ENCODE measurements at regions of chr21 and their contacts with region 1.

Region 1: DNA sequence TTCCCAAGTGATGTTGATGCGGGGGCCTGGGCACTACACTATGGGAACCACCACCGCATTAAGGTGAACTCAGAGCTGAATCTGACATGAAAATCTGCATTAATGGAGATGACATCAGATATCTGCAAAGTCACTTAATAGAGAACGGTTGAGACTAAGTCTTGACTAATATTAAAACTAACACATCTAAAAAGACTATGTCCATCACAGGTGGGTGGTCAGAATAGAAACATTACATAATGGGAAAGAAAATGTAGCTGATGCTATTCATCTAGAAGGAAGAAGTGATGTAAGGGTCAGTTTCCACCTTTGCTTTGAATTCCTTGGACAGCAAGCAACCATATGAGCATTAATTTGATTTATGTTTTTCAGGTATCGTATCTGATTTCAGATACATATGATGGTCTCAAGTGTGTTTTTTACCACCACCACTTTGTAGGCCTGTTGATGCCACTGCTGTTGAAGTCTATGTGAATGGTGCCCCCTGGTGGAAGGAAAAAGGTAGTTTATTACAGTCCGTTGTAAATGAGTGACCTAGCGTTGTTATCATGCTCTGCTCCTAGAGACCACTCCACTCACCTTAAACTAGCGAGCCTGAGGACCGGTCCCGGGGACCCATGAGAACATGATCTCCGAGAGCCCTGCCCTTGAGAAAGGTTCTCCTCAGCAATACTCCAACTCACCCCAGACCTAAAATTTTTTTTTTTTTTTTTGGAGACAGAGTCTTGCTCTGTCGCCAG is 73.5 kb downstream of the BACH1 start:
- DNase-seq: peak in 8 of 9 experiments; percentile 26 to 83 (median 53)
- ATAC-seq: peak; percentile 79
- H3K4me3 ChIP-seq: no peak overlapping the region
- H3K4me3 Mint-ChIP-seq: no peak overlapping the region
- H3K27ac ChIP-seq: no peak overlapping the region
- H3K27ac Mint-ChIP-seq: no peak overlapping the region
- H3K4me1 ChIP-seq: peaks cover 9% of the 10 kb centered on the region
- H3K4me1 Mint-ChIP-seq: peaks cover 10% of the 10 kb centered on the region
- H3K27me3 ChIP-seq: no peaks in the 10 kb centered on the region
- H3K27me3 Mint-ChIP-seq: no peaks in the 10 kb centered on the region
- CTCF ChIP-seq: peak; percentile 63

Region 2: DNA sequence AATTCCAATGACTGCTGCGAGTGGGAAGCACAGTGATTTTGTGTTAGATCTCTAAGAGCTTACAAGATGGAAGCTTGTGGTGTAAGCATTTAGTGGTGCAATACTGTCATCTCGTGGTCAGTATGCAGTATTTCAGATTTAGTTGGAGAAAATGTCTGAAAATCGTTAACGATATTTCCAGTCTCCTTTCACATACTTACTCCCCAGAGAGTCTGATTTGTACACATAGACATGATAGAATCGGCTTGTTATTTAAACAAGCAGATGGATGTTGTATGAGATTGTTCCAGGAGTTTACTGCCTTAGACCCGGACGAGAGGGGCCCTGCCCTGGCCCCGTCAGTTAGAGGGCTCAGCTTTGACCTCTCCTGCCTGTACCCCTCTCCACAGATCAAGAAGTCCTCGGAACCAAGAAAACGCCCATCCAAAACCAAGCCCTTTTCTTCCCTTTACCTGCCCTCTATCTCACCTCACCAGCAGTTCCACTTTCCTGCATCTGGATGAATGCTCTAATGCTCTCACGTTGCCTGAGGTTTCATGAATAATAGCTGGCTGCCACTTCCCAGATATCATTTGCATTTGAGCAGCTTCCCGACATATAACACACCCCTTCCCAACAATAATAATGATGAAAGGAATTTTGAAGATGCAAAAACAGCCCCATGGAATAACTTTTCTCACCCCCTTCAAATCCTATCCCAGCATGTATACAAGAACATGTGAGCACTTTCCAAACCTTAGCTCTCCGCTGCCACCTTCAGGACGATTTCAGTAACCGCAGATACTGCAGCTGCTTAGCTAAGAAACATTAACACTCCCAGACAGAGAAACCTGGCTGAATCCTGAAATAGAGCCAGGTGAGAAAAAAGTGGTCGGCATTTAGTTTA is 626.9 kb before region 1 on chr21:
- CTCF ChIA-PET with region 1: no interaction called
- POLR2A ChIA-PET with region 1: no interaction called
- intact Hi-C with region 1: loop called in 1 of 2 experiments (anchors 10 kb)
- DNase-seq: peak; percentile 42 to 86 (median 68)
- ATAC-seq: peak; percentile 86
- H3K4me3 ChIP-seq: peak overlapping the region; percentile 49 to 50
- H3K4me3 Mint-ChIP-seq: no peak overlapping the region
- H3K27ac ChIP-seq: no peak overlapping the region
- H3K27ac Mint-ChIP-seq: no peak overlapping the region
- H3K4me1 ChIP-seq: no peaks in the 10 kb centered on the region
- H3K4me1 Mint-ChIP-seq: no peaks in the 10 kb centered on the region
- H3K27me3 ChIP-seq: no peaks in the 10 kb centered on the region
- H3K27me3 Mint-ChIP-seq: no peaks in the 10 kb centered on the region
- CTCF ChIP-seq: peak; percentile 73

Region 3: DNA sequence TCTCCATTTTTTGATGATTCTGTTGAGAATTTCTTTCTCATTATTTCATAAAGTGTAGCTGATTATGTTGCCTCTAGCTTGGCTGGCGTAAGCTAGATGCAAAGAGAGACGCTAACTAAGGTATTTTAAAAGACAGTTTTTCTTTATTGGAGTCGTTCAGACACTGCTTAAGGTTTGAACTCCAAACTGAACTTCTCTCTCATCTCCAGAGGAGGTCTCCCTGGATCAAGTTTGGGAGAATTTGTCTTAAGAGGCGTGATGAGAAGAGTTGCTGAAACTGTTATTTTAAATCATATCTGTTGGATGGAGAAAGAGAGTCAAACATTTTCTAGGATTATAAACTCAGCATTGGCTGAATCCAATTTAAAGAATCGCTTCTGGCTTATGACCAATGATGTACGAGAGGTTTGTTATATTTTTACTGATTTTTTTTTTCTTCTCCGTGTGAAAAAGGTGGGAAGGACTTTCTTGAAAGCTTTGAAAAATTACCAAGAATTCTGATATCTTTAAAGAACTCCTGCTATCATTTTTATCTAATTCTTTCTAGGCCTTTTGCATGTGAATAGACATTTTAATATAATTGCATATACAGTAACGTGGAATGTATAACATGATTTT is 207.8 kb before region 1 on chr21:
- CTCF ChIA-PET with region 1: no interaction called
- POLR2A ChIA-PET with region 1: no interaction called
- intact Hi-C with region 1: loop called in 1 of 2 experiments (anchors 2 kb)
- DNase-seq: peak in 1 of 9 experiments; percentile 10
- ATAC-seq: no peak
- H3K4me3 ChIP-seq: no peak overlapping the region
- H3K4me3 Mint-ChIP-seq: no peak overlapping the region
- H3K27ac ChIP-seq: no peak overlapping the region
- H3K27ac Mint-ChIP-seq: no peak overlapping the region
- H3K4me1 ChIP-seq: no peaks in the 10 kb centered on the region
- H3K4me1 Mint-ChIP-seq: no peaks in the 10 kb centered on the region
- H3K27me3 ChIP-seq: no peaks in the 10 kb centered on the region
- H3K27me3 Mint-ChIP-seq: no peaks in the 10 kb centered on the region
- CTCF ChIP-seq: no peak

Region 4: GRCh38 chr21:29265690-29266479 is 106.3 kb before region 1 on chr21:
- CTCF ChIA-PET with region 1: interaction called, 4 read pairs
- POLR2A ChIA-PET with region 1: no interaction called
- intact Hi-C with region 1: loop called in 1 of 2 experiments (anchors 1 kb)
- DNase-seq: peak in 2 of 9 experiments; percentile 3 to 16
- ATAC-seq: no peak
- H3K4me3 ChIP-seq: no peak overlapping the region
- H3K4me3 Mint-ChIP-seq: no peak overlapping the region
- H3K27ac ChIP-seq: no peak overlapping the region
- H3K27ac Mint-ChIP-seq: no peak overlapping the region
- H3K4me1 ChIP-seq: no peaks in the 10 kb centered on the region
- H3K4me1 Mint-ChIP-seq: no peaks in the 10 kb centered on the region
- H3K27me3 ChIP-seq: no peaks in the 10 kb centered on the region
- H3K27me3 Mint-ChIP-seq: no peaks in the 10 kb centered on the region
- CTCF ChIP-seq: no peak

Region 5: GRCh38 chr21:29360799-29361765 is 11.2 kb before region 1 on chr21:
- CTCF ChIA-PET with region 1: interaction called, 21 read pairs
- POLR2A ChIA-PET with region 1: no interaction called
- intact Hi-C with region 1: no loop called
- DNase-seq: peak in 2 of 9 experiments; percentile 18 to 40
- ATAC-seq: no peak
- H3K4me3 ChIP-seq: no peak overlapping the region
- H3K4me3 Mint-ChIP-seq: no peak overlapping the region
- H3K27ac ChIP-seq: no peak overlapping the region
- H3K27ac Mint-ChIP-seq: peak overlapping the region; percentile 11
- H3K4me1 ChIP-seq: no peaks in the 10 kb centered on the region
- H3K4me1 Mint-ChIP-seq: peaks cover 18% of the 10 kb centered on the region
- H3K27me3 ChIP-seq: no peaks in the 10 kb centered on the region
- H3K27me3 Mint-ChIP-seq: no peaks in the 10 kb centered on the region
- CTCF ChIP-seq: peak; percentile 38

Region 6: GRCh38 chr21:31088315-31088714 is 1716.1 kb after region 1 on chr21:
- CTCF ChIA-PET with region 1: no interaction called
- POLR2A ChIA-PET with region 1: no interaction called
- intact Hi-C with region 1: loop called in 1 of 2 experiments (anchors 10 kb)
- DNase-seq: peak in 1 of 9 experiments; percentile 7
- ATAC-seq: no peak
- H3K4me3 ChIP-seq: no peak overlapping the region
- H3K4me3 Mint-ChIP-seq: no peak overlapping the region
- H3K27ac ChIP-seq: no peak overlapping the region
- H3K27ac Mint-ChIP-seq: no peak overlapping the region
- H3K4me1 ChIP-seq: no peaks in the 10 kb centered on the region
- H3K4me1 Mint-ChIP-seq: peaks cover 8% of the 10 kb centered on the region
- H3K27me3 ChIP-seq: peaks cover 0 to 2% of the 10 kb centered on the region in 2 experiments
- H3K27me3 Mint-ChIP-seq: no peaks in the 10 kb centered on the region
- CTCF ChIP-seq: no peak